Caco-2 (cell line): ENCODE measurements at regions of chr10 and their contacts with region 1.

Region 1: DNA sequence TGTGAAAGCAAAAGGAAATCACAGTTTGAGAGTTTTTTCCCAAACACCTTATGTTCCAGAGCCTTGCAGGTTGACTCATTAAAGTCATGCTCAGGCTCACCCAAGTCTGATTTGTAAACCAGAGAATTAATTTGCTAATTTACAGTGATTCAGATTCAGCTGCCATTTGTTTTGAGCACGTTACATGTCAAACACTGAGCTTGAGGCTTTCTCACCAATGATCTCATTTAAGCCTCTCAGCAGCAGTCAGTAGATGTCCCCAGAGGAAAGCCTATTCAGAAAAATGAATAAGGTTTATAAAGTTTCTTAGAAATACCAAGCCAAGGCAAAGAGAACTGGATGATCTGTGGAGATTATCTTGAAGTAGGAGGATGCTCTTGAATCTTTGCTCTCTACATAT is 420.4 kb downstream of the HTR7 start:
- DNase-seq: no peak
- H3K4me3 ChIP-seq: no peak overlapping the region
- H3K4me3 Mint-ChIP-seq: no peak overlapping the region
- H3K27ac Mint-ChIP-seq: no peak overlapping the region
- H3K4me1 ChIP-seq: no peaks in the 10 kb centered on the region
- H3K4me1 Mint-ChIP-seq: no peaks in the 10 kb centered on the region
- H3K27me3 ChIP-seq: 0 out of 2 replicates have a peak, but pooled peaks cover 1% of the 10 kb centered on the region
- H3K27me3 Mint-ChIP-seq: peaks cover 3% of the 10 kb centered on the region
- CTCF ChIP-seq: no peak

Region 2: DNA sequence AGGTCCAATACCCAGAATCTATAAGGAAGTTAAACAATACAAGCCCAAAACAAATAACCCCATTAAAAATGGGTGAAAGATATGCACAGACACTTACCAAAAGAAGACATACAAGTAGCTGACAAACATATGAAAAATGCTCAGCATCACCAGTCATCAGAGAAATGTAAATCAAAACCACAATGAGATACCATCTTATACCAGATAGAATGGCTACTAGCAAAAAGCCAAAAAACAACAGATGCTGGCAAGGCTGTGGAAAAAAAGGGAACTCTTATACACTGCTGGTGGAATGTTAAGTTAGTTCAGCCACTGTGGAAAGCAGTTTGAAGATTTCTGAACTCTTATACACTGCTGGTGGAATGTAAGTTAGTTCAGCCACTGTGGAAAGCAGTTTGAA is 404.9 kb before region 1 on chr10:
- CTCF ChIA-PET with region 1: no interaction called
- POLR2A ChIA-PET with region 1: no interaction called
- intact Hi-C with region 1: no loop called
- DNase-seq: no peak
- H3K4me3 ChIP-seq: no peak overlapping the region
- H3K4me3 Mint-ChIP-seq: no peak overlapping the region
- H3K27ac Mint-ChIP-seq: no peak overlapping the region
- H3K4me1 ChIP-seq: no peaks in the 10 kb centered on the region
- H3K4me1 Mint-ChIP-seq: no peaks in the 10 kb centered on the region
- H3K27me3 ChIP-seq: no peaks in the 10 kb centered on the region
- H3K27me3 Mint-ChIP-seq: peaks cover 5% of the 10 kb centered on the region
- CTCF ChIP-seq: no peak

Region 3: GRCh38 chr10:90288391-90288933 is 149.0 kb before region 1 on chr10:
- CTCF ChIA-PET with region 1: no interaction called
- POLR2A ChIA-PET with region 1: no interaction called
- intact Hi-C with region 1: loop called (anchors 10 kb)
- DNase-seq: no peak
- H3K4me3 ChIP-seq: no peak overlapping the region
- H3K4me3 Mint-ChIP-seq: no peak overlapping the region
- H3K27ac Mint-ChIP-seq: no peak overlapping the region
- H3K4me1 ChIP-seq: no peaks in the 10 kb centered on the region
- H3K4me1 Mint-ChIP-seq: no peaks in the 10 kb centered on the region
- H3K27me3 ChIP-seq: no peaks in the 10 kb centered on the region
- H3K27me3 Mint-ChIP-seq: peaks cover 23% of the 10 kb centered on the region
- CTCF ChIP-seq: no peak

Region 4: GRCh38 chr10:91893051-91893450 is 1455.6 kb after region 1 on chr10:
- CTCF ChIA-PET with region 1: no interaction called
- POLR2A ChIA-PET with region 1: no interaction called
- intact Hi-C with region 1: no loop called
- DNase-seq: no peak
- H3K4me3 ChIP-seq: no peak overlapping the region
- H3K4me3 Mint-ChIP-seq: no peak overlapping the region
- H3K27ac Mint-ChIP-seq: no peak overlapping the region
- H3K4me1 ChIP-seq: peaks cover 4% of the 10 kb centered on the region; the same call in 1 of the 2 replicates
- H3K4me1 Mint-ChIP-seq: peaks cover under 1% of the 10 kb centered on the region
- H3K27me3 ChIP-seq: no peaks in the 10 kb centered on the region; the same call in 1 of the 2 replicates
- H3K27me3 Mint-ChIP-seq: no peaks in the 10 kb centered on the region
- CTCF ChIP-seq: no peak